Activated CD4-positive, alpha-beta T cell treated with anti-CD3 and anti-CD28 coated beads for 36 hours (primary cell): ENCODE measurements at regions of chr2 and their contacts with region 1.

Region 1: GRCh38 chr2:189440947-189441708 is at the start of gene WDR75:
- DNase-seq: peak; percentile 95
- ATAC-seq: peak; percentile 91
- H3K4me3 Mint-ChIP-seq: no peak within 1 kb of the TSS
- H3K27ac Mint-ChIP-seq: peak within 1 kb of the TSS; percentile 99
- H3K4me1 Mint-ChIP-seq: peaks cover 20% of the 10 kb centered on the region
- H3K27me3 Mint-ChIP-seq: no peaks in the 10 kb centered on the region
- total RNA-seq, gene WDR75: 82.1 to 82.3 TPM

Region 2: DNA sequence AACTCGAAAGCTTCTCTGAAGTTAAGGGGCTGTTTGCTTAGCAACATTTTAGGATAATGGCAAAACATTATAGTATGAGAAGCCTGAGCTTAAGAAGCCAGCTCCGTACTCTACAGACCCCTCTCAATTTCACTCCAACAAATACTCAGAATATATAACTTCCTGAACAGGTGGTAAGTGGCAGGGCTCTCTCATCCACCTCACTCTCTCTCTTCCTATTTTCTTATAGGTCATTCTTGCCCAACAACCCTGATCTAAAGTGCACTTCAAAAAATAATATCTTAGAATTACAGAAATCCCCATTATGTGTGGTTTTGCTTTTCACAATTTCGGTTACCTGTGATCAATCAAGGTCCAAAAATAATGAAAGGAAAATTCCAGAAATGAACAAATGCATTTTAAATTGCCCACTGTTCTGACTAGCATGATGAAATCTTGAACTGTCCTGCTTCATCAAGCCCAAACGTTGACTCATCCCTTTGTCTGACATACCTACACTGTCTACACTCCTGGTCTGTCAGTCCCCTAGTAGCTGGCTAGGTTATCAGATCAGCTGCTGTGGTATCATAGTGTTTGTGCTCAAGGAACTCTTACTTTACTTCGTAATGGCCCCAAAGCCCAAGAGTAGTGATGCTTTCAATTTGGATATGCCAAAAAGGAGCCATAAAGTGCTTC is 138.7 kb before region 1 on chr2:
- CTCF ChIA-PET with region 1: interaction called, 3 read pairs
- POLR2A ChIA-PET with region 1: no interaction called
- intact Hi-C with region 1: loop called (anchors 2 to 10 kb)
- DNase-seq: no peak
- ATAC-seq: peak; percentile 68
- H3K4me3 Mint-ChIP-seq: no peak overlapping the region
- H3K27ac Mint-ChIP-seq: peak overlapping the region; percentile 87
- H3K4me1 Mint-ChIP-seq: peaks cover 85% of the 10 kb centered on the region
- H3K27me3 Mint-ChIP-seq: no peaks in the 10 kb centered on the region

Region 3: DNA sequence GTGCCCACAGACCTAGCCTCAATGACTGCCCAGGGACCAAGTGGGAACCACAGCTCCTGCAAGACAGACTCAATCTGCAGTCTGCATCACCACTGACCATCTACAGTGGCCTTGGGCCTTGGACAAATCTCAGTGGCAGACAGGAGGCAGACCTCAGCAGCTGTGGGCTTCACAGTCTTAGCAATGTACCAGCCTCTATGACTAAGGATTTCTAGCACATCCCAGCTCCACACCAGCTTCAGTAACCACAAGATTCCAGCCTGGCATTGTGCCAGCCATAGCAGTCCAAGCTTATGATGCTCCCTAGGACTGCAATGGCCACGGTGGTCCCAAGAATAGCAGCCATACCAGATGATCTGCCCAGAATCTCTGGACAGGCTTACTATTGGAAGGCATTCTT is 19.5 kb before region 1 on chr2:
- CTCF ChIA-PET with region 1: no interaction called
- POLR2A ChIA-PET with region 1: no interaction called
- intact Hi-C with region 1: no loop called
- DNase-seq: no peak
- ATAC-seq: no peak
- H3K4me3 Mint-ChIP-seq: no peak overlapping the region
- H3K27ac Mint-ChIP-seq: no peak overlapping the region
- H3K4me1 Mint-ChIP-seq: no peaks in the 10 kb centered on the region
- H3K27me3 Mint-ChIP-seq: peaks cover 2% of the 10 kb centered on the region

Region 4: DNA sequence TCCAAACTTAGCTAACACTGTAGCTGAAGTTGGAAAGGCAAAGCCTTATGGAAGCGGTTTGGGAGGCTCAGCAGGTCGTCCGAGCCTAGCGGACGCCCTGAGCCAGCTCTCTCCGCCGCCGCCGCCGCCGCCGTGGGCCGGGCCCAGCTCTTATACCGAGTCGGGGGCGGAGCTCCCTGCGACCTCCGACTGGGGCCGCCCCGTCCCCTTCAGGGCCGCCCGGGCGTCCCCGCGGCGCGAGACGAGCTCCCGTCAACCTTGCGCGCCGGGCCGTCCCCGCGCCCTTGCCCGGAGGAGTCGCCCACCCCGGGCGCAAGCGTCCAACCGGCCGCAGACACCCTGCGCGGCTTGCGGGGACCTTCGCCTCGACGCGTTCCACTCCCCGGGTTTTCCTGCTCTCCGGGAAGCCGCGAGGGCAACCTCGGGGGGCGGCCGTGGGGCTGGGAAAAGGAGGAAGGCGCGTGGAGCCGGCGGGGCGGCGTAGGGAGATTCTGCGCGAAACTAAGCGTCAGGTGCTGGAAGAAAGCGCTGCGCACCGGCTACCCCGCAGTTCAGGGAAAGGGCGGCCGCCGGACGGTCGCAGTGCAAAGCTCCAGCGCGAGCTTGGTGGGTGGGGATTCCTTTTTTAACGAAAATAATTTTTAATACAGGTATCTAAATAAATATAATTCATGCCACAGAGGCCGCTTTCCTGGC is 139.7 kb after region 1 on chr2 and contains the start of gene SLC40A1:
- CTCF ChIA-PET with region 1: interaction called, 3 read pairs
- POLR2A ChIA-PET with region 1: no interaction called
- intact Hi-C with region 1: loop called (anchors 1 to 5 kb)
- DNase-seq: peak; percentile 82
- ATAC-seq: peak; percentile 97
- H3K4me3 Mint-ChIP-seq: peak within 1 kb of the TSS; percentile 75
- H3K27ac Mint-ChIP-seq: peak within 1 kb of the TSS; percentile 80
- H3K4me1 Mint-ChIP-seq: peaks cover 41% of the 10 kb centered on the region
- H3K27me3 Mint-ChIP-seq: peaks cover 16% of the 10 kb centered on the region
- total RNA-seq, gene SLC40A1: 4.2 TPM

Region 5: GRCh38 chr2:189641590-189641989 is 200.5 kb after region 1 on chr2:
- CTCF ChIA-PET with region 1: no interaction called
- POLR2A ChIA-PET with region 1: no interaction called
- intact Hi-C with region 1: loop called in 1 of 2 experiments (anchors 1 kb)
- DNase-seq: peak; percentile 74
- ATAC-seq: peak; percentile 97
- H3K4me3 Mint-ChIP-seq: no peak overlapping the region
- H3K27ac Mint-ChIP-seq: peak overlapping the region; percentile 52
- H3K4me1 Mint-ChIP-seq: peaks cover 27% of the 10 kb centered on the region
- H3K27me3 Mint-ChIP-seq: no peaks in the 10 kb centered on the region

Region 6: DNA sequence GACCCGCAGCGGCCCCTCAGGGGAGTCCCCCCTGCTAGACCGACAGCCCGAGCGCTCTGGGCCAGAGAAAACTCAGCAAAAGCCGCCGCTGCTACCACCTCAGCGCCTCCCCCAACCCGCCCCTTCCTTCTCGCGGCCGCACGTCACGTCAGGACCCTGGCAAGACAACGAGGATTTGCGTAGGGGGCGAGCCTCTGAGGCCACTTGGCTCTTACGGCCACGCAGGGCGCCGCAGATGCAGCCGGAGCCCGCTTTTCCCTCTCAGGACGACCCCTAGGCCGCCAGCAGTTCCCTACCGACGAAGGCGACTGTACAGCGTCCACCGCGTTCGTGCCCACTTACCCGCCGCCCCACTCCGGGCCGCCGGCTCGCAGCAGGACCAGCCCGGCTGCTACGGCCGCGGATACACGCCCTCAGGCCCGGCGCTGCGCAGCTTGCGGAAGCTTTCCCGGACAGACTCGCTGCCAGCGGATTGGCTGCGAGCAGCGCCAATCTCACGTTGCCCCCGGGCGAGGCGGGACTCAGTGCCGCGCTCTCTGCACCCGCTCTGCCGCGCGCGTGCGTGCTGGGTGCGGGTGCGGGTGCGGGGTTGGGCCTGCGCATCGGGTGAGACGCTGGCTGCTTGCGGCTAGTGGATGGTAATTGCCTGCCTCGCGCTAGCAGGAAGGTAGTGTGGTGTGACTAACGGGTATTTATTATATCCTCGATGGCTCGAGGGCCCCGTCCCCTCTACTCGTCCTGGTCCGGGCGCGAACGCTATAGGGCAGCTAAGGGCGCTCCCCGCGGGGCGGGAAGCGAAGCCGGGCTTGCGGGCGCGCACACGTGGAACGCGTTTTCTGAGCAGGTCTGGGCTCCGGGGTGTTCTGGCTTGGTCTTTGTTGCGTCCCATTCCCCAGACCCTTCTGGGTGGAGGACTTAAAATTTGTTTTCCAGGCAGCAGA is 343.1 kb after region 1 on chr2 and contains the starts of genes ORMDL1 and PMS1:
- CTCF ChIA-PET with region 1: no interaction called
- POLR2A ChIA-PET with region 1: no interaction called
- intact Hi-C with region 1: loop called (anchors 1 to 5 kb)
- DNase-seq: peak; percentile 96
- ATAC-seq: peak; percentile 92
- H3K4me3 Mint-ChIP-seq: peak within 1 kb of the TSS; percentile 74
- H3K27ac Mint-ChIP-seq: peak within 1 kb of the TSS; percentile 94
- H3K4me1 Mint-ChIP-seq: peaks cover 52% of the 10 kb centered on the region
- H3K27me3 Mint-ChIP-seq: no peaks in the 10 kb centered on the region
- total RNA-seq, gene ORMDL1: 45.2 to 49.2 TPM
- total RNA-seq, gene PMS1: 45.8 to 47.4 TPM

Region 7: GRCh38 chr2:190534310-190535120 is 1093.4 kb after region 1 on chr2 and contains the start of gene NEMP2:
- CTCF ChIA-PET with region 1: no interaction called
- POLR2A ChIA-PET with region 1: no interaction called
- intact Hi-C with region 1: loop called in 1 of 2 experiments (anchors 5 kb)
- DNase-seq: peak; percentile 87
- ATAC-seq: peak; percentile 70
- H3K4me3 Mint-ChIP-seq: peak within 1 kb of the TSS; percentile 95
- H3K27ac Mint-ChIP-seq: peak within 1 kb of the TSS; percentile 98
- H3K4me1 Mint-ChIP-seq: peaks cover 52% of the 10 kb centered on the region
- H3K27me3 Mint-ChIP-seq: no peaks in the 10 kb centered on the region
- total RNA-seq, gene NEMP2: 24.6 to 25.1 TPM